Stomach (tissue), 19 donors: ENCODE measurements at regions of chr1 and their contacts with region 1.

Region 1: DNA sequence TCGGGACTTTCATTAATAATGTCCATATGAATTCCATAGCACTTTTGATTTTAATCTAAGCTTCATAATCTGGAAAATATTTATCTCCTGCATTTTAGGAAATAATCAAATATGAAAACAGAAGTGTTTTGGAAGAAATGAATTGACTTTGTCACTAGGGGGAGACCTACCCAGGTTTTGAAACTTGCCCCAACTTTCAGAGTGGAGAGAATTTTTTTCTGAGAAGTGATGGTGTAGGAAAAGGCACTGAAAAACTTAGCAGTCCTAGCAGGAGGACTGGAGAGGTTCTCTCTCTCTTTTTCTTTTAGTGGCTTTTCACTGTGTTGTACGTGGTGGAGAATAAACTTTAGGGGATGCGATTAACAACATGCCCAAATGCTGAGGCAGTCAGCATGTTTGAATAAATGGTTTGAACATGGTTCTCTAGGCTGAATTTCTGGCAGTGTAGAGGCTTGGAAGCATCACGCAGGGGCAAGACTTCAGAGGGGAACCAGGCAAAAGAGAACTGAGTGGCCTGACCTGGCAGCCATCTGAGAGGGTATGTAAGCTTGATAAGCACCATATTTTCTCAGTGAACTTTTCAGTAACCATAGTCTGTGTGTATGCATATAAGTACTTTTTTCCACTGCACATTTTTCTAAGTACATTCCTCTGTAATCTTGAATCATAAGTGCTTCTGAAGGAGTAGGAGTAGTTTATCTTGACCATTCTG is 68.3 kb upstream of the NEK7 start:
- DNase-seq: peak in 1 of 2 donors; percentile 49
- H3K4me3 ChIP-seq: no peak overlapping the region
- H3K27ac ChIP-seq: no peak overlapping the region
- H3K4me1 ChIP-seq: no peaks in the 10 kb centered on the region
- H3K27me3 ChIP-seq: no peaks in the 10 kb centered on the region
- CTCF ChIP-seq: peak in 3 of 7 experiments; percentile 33 to 46 (median 40)
- EP300 ChIP-seq: no peak
- POLR2A ChIP-seq: no peak

Region 2: DNA sequence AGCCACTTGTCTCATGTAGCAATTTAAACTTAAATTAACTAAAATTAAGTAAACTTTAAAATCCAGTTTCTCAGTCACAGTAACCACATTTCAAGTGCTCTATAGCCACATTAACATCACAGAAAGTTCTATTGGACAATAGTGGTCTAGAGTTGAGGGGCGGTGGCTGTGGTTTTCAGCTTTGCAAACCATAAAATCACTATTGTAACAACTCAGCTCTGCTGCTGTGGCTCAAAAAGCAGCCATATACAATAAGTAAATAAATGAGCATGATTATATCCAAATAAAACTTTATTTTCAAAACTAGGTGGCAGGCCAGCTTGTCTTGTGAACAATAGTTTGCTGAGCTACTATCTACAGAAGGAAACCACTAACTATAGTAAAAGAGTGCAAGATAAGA is 229.5 kb before region 1 on chr1:
- intact Hi-C with region 1: no loop called
- DNase-seq: no peak
- H3K4me3 ChIP-seq: no peak overlapping the region
- H3K27ac ChIP-seq: no peak overlapping the region
- H3K4me1 ChIP-seq: no peaks in the 10 kb centered on the region
- H3K27me3 ChIP-seq: no peaks in the 10 kb centered on the region
- CTCF ChIP-seq: no peak
- EP300 ChIP-seq: no peak
- POLR2A ChIP-seq: no peak

Region 3: GRCh38 chr1:198465201-198466144 is 377.0 kb after region 1 on chr1:
- intact Hi-C with region 1: loop called (anchors 10 kb)
- DNase-seq: peak in 1 of 2 donors; percentile 71
- H3K4me3 ChIP-seq: no peak overlapping the region
- H3K27ac ChIP-seq: no peak overlapping the region
- H3K4me1 ChIP-seq: no peaks in the 10 kb centered on the region
- H3K27me3 ChIP-seq: no peaks in the 10 kb centered on the region
- CTCF ChIP-seq: peak in 5 of 7 experiments; percentile 30 to 54 (median 42)
- EP300 ChIP-seq: no peak
- POLR2A ChIP-seq: no peak